Activated CD8-positive, alpha-beta T cell treated with anti-CD3 and anti-CD28 coated beads for 36 hours (primary cell): ENCODE measurements at regions of chr18 and their contacts with region 1.

Region 1: GRCh38 chr18:62844850-62845643 is 129.7 kb downstream of the PHLPP1 start:
- DNase-seq: peak; percentile 38
- ATAC-seq: peak; percentile 86
- H3K4me3 Mint-ChIP-seq: peak overlapping the region; percentile 43
- H3K27ac Mint-ChIP-seq: peak overlapping the region; percentile 77
- H3K4me1 Mint-ChIP-seq: peaks cover 33% of the 10 kb centered on the region
- H3K27me3 Mint-ChIP-seq: no peaks in the 10 kb centered on the region
- CTCF ChIP-seq: no peak

Region 2: DNA sequence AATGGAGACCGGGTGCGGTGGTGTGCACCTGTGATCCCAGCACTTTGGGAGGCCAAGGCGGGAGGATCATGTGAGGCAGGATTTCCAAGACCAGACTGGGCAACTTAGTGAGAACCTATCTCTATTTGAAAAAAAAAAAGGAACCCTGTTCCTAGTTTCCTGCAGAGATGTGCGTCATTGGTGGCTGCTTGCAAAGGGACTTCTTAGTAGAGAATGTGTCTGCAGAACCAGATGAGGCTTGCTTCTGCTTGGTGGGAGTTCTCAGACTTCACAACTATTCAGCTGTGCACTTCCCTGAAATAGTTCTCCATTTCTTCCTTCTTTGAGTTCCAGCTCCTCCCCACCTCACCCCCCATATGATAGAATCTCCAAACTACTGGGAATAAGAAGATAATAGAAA is 299.9 kb before region 1 on chr18:
- CTCF ChIA-PET with region 1: no interaction called
- POLR2A ChIA-PET with region 1: no interaction called
- intact Hi-C with region 1: no loop called
- DNase-seq: no peak
- ATAC-seq: no peak
- H3K4me3 Mint-ChIP-seq: no peak overlapping the region
- H3K27ac Mint-ChIP-seq: no peak overlapping the region
- H3K4me1 Mint-ChIP-seq: no peaks in the 10 kb centered on the region
- H3K27me3 Mint-ChIP-seq: no peaks in the 10 kb centered on the region
- CTCF ChIP-seq: no peak

Region 3: GRCh38 chr18:62784966-62785413 is 60.1 kb before region 1 on chr18:
- CTCF ChIA-PET with region 1: no interaction called
- POLR2A ChIA-PET with region 1: no interaction called
- intact Hi-C with region 1: loop called (anchors 10 kb)
- DNase-seq: peak; percentile 30
- ATAC-seq: peak; percentile 46
- H3K4me3 Mint-ChIP-seq: no peak overlapping the region
- H3K27ac Mint-ChIP-seq: peak overlapping the region; percentile 85
- H3K4me1 Mint-ChIP-seq: peaks cover 58% of the 10 kb centered on the region
- H3K27me3 Mint-ChIP-seq: no peaks in the 10 kb centered on the region
- CTCF ChIP-seq: no peak